GM12878 (cell line): ENCODE measurements at regions of chr7 and their contacts with region 1.

Region 1: GRCh38 chr7:95476904-95477594 is 8.7 kb upstream of the ASB4 start:
- DNase-seq: peak; percentile 28
- ATAC-seq: peak; percentile 73
- H3K4me3 ChIP-seq: no peak overlapping the region
- H3K27ac ChIP-seq: no peak overlapping the region
- H3K4me1 ChIP-seq: peaks cover 4% of the 10 kb centered on the region
- H3K27me3 ChIP-seq: no peaks in the 10 kb centered on the region
- CTCF ChIP-seq: peak; percentile 69 to 86 (median 74)
- EP300 ChIP-seq: no peak
- POLR2A ChIP-seq: no peak
- RAD21 ChIP-seq: peak; percentile 94

Region 2: DNA sequence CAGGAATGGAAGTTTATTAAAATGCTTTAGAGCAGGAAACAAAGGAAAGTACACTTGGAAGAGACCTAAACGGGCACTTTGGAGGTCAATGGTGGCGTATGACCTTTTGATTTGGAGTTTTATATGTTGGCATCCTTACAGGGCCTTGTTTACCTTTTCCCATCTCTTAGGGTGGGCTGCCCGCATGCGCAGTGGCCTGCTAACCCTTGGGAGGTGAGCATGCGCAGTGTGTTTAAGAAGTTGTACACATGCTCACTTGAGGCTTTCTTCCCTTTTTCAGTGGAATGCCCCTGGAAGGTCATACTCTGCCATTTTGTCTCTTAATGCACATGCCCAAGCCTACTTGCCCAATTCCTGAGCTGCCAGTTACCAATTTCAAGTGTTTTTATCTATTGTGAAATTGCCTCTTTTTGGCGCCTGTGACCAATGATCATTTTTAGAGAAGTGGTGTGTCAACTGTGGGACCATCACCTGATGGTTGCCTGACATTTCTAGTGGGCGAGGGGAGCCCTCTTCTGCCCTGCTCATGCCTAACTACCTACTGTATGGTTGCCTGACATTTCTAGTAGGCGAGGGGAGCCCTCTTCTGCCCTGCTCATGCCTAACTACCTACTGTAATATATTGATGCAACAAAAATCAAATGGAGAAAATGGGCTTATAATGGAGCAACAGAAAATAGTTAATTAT is 431.7 kb before region 1 on chr7:
- CTCF ChIA-PET with region 1: interaction called, 6 read pairs
- POLR2A ChIA-PET with region 1: no interaction called
- RAD21 ChIA-PET with region 1: interaction called, 10 read pairs
- SMC1A ChIA-PET with region 1: interaction called, 19 read pairs
- in situ Hi-C with region 1: no loop called
- intact Hi-C with region 1: no loop called
- DNase-seq: no peak
- ATAC-seq: peak; percentile 76
- H3K4me3 ChIP-seq: no peak overlapping the region
- H3K27ac ChIP-seq: no peak overlapping the region
- H3K4me1 ChIP-seq: no peaks in the 10 kb centered on the region
- H3K27me3 ChIP-seq: no peaks in the 10 kb centered on the region
- CTCF ChIP-seq: peak in 1 of 3 experiments; percentile 30; a peak in 2 of 6 replicates
- EP300 ChIP-seq: no peak
- POLR2A ChIP-seq: no peak
- RAD21 ChIP-seq: peak; percentile 48; the same call in 1 of the 2 replicates

Region 3: GRCh38 chr7:95263785-95264575 is 213.1 kb before region 1 on chr7:
- CTCF ChIA-PET with region 1: interaction called, 15 read pairs
- POLR2A ChIA-PET with region 1: no interaction called
- RAD21 ChIA-PET with region 1: interaction called, 8 read pairs
- SMC1A ChIA-PET with region 1: interaction called, 6 read pairs
- in situ Hi-C with region 1: no loop called
- intact Hi-C with region 1: no loop called
- DNase-seq: no peak
- ATAC-seq: peak; percentile 78
- H3K4me3 ChIP-seq: no peak overlapping the region
- H3K27ac ChIP-seq: no peak overlapping the region
- H3K4me1 ChIP-seq: no peaks in the 10 kb centered on the region
- H3K27me3 ChIP-seq: no peaks in the 10 kb centered on the region
- CTCF ChIP-seq: no peak
- EP300 ChIP-seq: no peak
- POLR2A ChIP-seq: no peak
- RAD21 ChIP-seq: no peak

Region 4: GRCh38 chr7:95396136-95397032 is 80.7 kb before region 1 on chr7 and contains the start of gene PON3:
- CTCF ChIA-PET with region 1: interaction called, 23 read pairs
- POLR2A ChIA-PET with region 1: interaction called, 3 read pairs
- RAD21 ChIA-PET with region 1: interaction called, 14 read pairs
- SMC1A ChIA-PET with region 1: interaction called, 32 read pairs
- in situ Hi-C with region 1: no loop called
- intact Hi-C with region 1: no loop called
- DNase-seq: no peak
- ATAC-seq: peak; percentile 76
- H3K4me3 ChIP-seq: no peak within 1 kb of the TSS
- H3K27ac ChIP-seq: no peak within 1 kb of the TSS
- H3K4me1 ChIP-seq: no peaks in the 10 kb centered on the region
- H3K27me3 ChIP-seq: peaks cover 0 to 6% of the 10 kb centered on the region in 2 experiments; a peak in 2 of 4 replicates
- CTCF ChIP-seq: peak; percentile 24 to 48 (median 26); a peak in 4 of 6 replicates
- EP300 ChIP-seq: no peak
- POLR2A ChIP-seq: no peak
- RAD21 ChIP-seq: peak; percentile 32; the same call in 1 of the 2 replicates
- polyA plus RNA-seq, gene PON3: 1.4 to 2.0 TPM

Region 5: GRCh38 chr7:95434557-95435421 is 42.3 kb before region 1 on chr7 and contains the start of gene PON2:
- CTCF ChIA-PET with region 1: interaction called, 19 read pairs
- POLR2A ChIA-PET with region 1: interaction called, 5 read pairs
- RAD21 ChIA-PET with region 1: interaction called, 36 read pairs
- SMC1A ChIA-PET with region 1: interaction called, 21 read pairs
- in situ Hi-C with region 1: no loop called
- intact Hi-C with region 1: no loop called
- DNase-seq: peak; percentile 55
- ATAC-seq: peak; percentile 96
- H3K4me3 ChIP-seq: peak within 1 kb of the TSS; percentile 56
- H3K27ac ChIP-seq: no peak within 1 kb of the TSS
- H3K4me1 ChIP-seq: no peaks in the 10 kb centered on the region
- H3K27me3 ChIP-seq: no peaks in the 10 kb centered on the region
- CTCF ChIP-seq: no peak
- EP300 ChIP-seq: peak in 1 of 2 experiments; percentile 57; a peak in 1 of 4 replicates
- POLR2A ChIP-seq: peak; percentile 55; the same call in 1 of the 2 replicates
- RAD21 ChIP-seq: no peak
- polyA plus RNA-seq, gene PON2: 22.9 to 30.2 TPM

Region 6: DNA sequence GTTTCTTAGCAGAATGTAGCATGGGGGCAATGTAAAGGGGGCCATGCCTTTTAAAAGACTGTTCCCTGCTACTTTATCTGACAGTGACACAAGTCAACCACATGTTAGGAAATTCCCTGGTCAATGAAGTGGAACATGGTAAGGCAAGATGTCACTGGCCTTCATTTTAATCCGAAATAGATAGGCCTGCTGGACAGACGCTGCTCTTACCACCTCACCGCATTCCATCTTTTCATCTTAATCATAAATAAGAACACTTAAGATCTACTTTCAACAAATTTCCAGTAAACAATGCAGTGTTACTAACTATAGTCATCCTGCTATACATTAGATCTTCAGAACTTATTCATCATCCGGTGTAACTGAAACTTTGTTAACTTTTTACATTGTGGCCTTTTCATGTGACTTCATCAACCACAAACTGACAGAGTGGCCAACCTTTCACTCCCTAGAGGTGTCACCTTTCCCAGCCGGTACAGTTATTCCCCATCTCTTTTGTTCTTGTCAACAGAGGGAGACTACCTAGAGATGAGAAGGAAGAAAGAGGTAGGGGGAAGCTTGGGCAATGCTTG is 24.3 kb after region 1 on chr7:
- CTCF ChIA-PET with region 1: interaction called, 136 read pairs
- POLR2A ChIA-PET with region 1: interaction called, 14 read pairs
- RAD21 ChIA-PET with region 1: interaction called, 51 read pairs
- SMC1A ChIA-PET with region 1: interaction called, 203 read pairs
- in situ Hi-C with region 1: no loop called
- intact Hi-C with region 1: no loop called
- DNase-seq: peak; percentile 87
- ATAC-seq: peak; percentile 78
- H3K4me3 ChIP-seq: peak overlapping the region; percentile 34; the same call in 1 of the 2 replicates
- H3K27ac ChIP-seq: peak overlapping the region; percentile 56
- H3K4me1 ChIP-seq: peaks cover 8% of the 10 kb centered on the region
- H3K27me3 ChIP-seq: no peaks in the 10 kb centered on the region
- CTCF ChIP-seq: no peak
- EP300 ChIP-seq: peak; percentile 96 to 97
- POLR2A ChIP-seq: no peak
- RAD21 ChIP-seq: no peak

Region 7: GRCh38 chr7:95690367-95690947 is 213.4 kb after region 1 on chr7:
- CTCF ChIA-PET with region 1: interaction called, 57 read pairs
- POLR2A ChIA-PET with region 1: no interaction called
- RAD21 ChIA-PET with region 1: interaction called, 21 read pairs
- SMC1A ChIA-PET with region 1: interaction called, 98 read pairs
- in situ Hi-C with region 1: no loop called
- intact Hi-C with region 1: no loop called
- DNase-seq: peak; percentile 8
- ATAC-seq: peak; percentile 84
- H3K4me3 ChIP-seq: no peak overlapping the region
- H3K27ac ChIP-seq: no peak overlapping the region
- H3K4me1 ChIP-seq: no peaks in the 10 kb centered on the region
- H3K27me3 ChIP-seq: no peaks in the 10 kb centered on the region
- CTCF ChIP-seq: peak; percentile 26 to 44 (median 34); a peak in 5 of 6 replicates
- EP300 ChIP-seq: no peak
- POLR2A ChIP-seq: no peak
- RAD21 ChIP-seq: peak; percentile 44